B cell (primary cell): ENCODE measurements at regions of chr1 and their contacts with region 1.

Region 1: GRCh38 chr1:229999004-229999670 is 67.9 kb upstream of the GALNT2 start:
- DNase-seq: no peak
- ATAC-seq: no peak
- H3K4me3 ChIP-seq: no peak overlapping the region
- H3K4me3 Mint-ChIP-seq: no peak overlapping the region
- H3K27ac ChIP-seq: no peak overlapping the region
- H3K27ac Mint-ChIP-seq: no peak overlapping the region
- H3K4me1 ChIP-seq: no peaks in the 10 kb centered on the region
- H3K4me1 Mint-ChIP-seq: no peaks in the 10 kb centered on the region
- H3K27me3 ChIP-seq: peaks cover 0 to 2% (median 0%) of the 10 kb centered on the region in 4 experiments
- H3K27me3 Mint-ChIP-seq: peaks cover 9% of the 10 kb centered on the region
- CTCF ChIP-seq: no peak

Region 2: GRCh38 chr1:229972600-229973296 is 26.4 kb before region 1 on chr1:
- CTCF ChIA-PET with region 1: no interaction called
- POLR2A ChIA-PET with region 1: no interaction called
- intact Hi-C with region 1: no loop called
- DNase-seq: peak; percentile 27
- ATAC-seq: no peak
- H3K4me3 ChIP-seq: no peak overlapping the region
- H3K4me3 Mint-ChIP-seq: no peak overlapping the region
- H3K27ac ChIP-seq: no peak overlapping the region
- H3K27ac Mint-ChIP-seq: no peak overlapping the region
- H3K4me1 ChIP-seq: no peaks in the 10 kb centered on the region
- H3K4me1 Mint-ChIP-seq: no peaks in the 10 kb centered on the region
- H3K27me3 ChIP-seq: peaks cover 0 to 9% (median 0%) of the 10 kb centered on the region in 4 experiments
- H3K27me3 Mint-ChIP-seq: peaks cover 5% of the 10 kb centered on the region
- CTCF ChIP-seq: no peak

Region 3: DNA sequence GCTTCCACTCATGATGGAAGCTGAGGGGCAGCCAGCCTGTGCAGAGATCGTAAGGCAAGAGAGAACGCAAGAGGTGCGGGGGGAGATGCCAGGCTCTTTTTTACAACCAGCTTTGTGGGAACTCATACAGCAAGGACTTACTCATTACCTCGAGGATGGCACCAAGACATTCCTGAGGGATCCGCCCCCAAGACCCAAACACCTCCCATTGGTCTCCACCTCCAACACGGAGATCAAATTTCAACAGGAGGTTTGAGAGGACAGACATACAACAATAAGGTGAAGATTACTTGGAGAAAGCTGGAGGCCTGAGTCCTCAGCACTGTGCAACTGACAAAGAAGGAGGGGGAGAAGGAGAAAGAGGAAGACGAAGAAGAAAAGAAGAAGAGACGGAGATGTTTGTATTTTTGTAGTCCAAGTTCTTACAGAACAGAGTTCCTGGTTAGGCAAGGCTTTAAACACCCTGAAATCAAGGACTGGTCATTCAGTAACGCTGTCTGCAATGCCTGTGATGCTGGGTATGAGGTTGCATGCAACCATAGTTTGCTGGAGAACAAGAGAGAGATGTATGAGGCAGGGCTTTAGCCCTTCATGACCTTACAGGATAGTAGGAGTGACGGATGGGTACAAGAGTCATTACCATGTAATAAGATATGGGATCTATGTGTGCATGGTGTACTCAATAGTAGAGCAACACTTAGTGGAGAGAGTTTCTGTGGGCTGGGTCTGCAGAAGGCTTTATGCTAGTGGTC is 48.2 kb after region 1 on chr1:
- CTCF ChIA-PET with region 1: no interaction called
- POLR2A ChIA-PET with region 1: no interaction called
- intact Hi-C with region 1: loop called (anchors 10 kb)
- DNase-seq: no peak
- ATAC-seq: no peak
- H3K4me3 ChIP-seq: no peak overlapping the region
- H3K4me3 Mint-ChIP-seq: no peak overlapping the region
- H3K27ac ChIP-seq: no peak overlapping the region
- H3K27ac Mint-ChIP-seq: no peak overlapping the region
- H3K4me1 ChIP-seq: no peaks in the 10 kb centered on the region
- H3K4me1 Mint-ChIP-seq: no peaks in the 10 kb centered on the region
- H3K27me3 ChIP-seq: peaks cover 0 to 7% (median 3%) of the 10 kb centered on the region in 4 experiments
- H3K27me3 Mint-ChIP-seq: peaks cover 37% of the 10 kb centered on the region
- CTCF ChIP-seq: no peak